PC-9 (cell line): ENCODE measurements at regions of chr4 and their contacts with region 1.

Region 1: DNA sequence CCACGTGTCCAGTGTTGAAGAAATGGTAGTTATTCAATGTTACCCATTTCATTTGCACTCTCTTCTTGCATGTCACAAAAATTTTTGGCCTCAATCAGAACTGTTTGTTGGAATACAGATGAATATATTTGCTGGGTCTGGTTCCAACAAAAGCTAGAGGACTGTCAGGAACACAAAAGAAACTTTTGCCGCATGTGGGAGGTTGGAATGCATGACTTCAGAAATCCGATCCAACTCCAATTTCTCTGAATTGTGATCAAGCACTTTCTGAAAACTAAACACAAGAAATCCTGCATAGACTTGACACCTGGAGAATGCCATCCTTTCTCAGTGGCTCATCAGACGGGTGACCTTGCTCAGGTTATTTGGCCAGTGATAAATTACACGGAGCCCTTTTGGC is 15.4 kb downstream of the SETD7 start:
- DNase-seq: no peak
- H3K4me3 ChIP-seq: no peak overlapping the region
- H3K27ac ChIP-seq: no peak overlapping the region
- H3K4me1 ChIP-seq: no peaks in the 10 kb centered on the region
- H3K27me3 ChIP-seq: no peaks in the 10 kb centered on the region
- CTCF ChIP-seq: no peak

Region 2: DNA sequence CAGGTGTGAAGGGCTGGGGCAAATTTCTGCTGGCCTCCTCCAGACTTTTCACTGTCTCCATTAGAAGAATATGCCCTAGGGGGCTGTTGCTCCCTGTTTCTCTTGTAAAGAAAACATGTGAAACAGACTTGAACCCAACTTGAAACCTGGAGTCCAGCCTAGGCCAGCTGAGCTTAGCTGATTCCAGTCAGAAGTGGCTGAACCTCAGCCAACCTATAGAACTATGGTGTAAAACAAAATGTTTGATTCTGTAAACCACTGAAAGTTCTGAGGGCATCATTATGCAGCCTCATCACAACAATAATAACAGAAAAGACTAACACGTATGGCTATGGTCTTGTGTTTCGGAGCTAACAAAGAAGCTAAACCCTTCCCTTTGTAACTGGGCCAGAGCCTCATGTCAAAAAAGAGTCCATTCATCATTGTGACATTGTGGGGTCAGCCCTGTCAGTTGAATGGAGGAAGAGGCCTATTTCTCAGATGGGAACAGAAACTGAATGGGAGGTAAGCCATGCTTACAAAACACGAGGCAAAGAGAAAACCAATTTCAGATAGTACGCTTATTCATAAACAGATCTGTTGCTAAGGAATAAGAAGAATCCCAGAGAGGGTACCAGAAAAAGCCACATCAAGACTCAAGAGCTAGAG is 18.8 kb before region 1 on chr4:
- CTCF ChIA-PET with region 1: no interaction called
- POLR2A ChIA-PET with region 1: interaction called, 11 read pairs
- intact Hi-C with region 1: no loop called
- DNase-seq: no peak
- H3K4me3 ChIP-seq: no peak overlapping the region
- H3K27ac ChIP-seq: no peak overlapping the region
- H3K4me1 ChIP-seq: no peaks in the 10 kb centered on the region
- H3K27me3 ChIP-seq: no peaks in the 10 kb centered on the region
- CTCF ChIP-seq: no peak